T-cell (primary cell): ENCODE measurements at regions of chr1 and their contacts with region 1.

Region 1: GRCh38 chr1:52636721-52637695 is 4.0 kb downstream of the SHISAL2A start:
- DNase-seq: peak; percentile 45 to 85 (median 65)
- ATAC-seq: peak; percentile 71 to 75 (median 72)
- H3K4me3 ChIP-seq: peak overlapping the region in 1 of 2 donors; percentile 22
- H3K4me3 Mint-ChIP-seq: peak overlapping the region; percentile 75 to 85 (median 83)
- H3K27ac ChIP-seq: peak overlapping the region; percentile 99
- H3K27ac Mint-ChIP-seq: peak overlapping the region; percentile 99 to 100
- H3K4me1 ChIP-seq: peaks cover 50 to 93% of the 10 kb centered on the region in 2 experiments
- H3K4me1 Mint-ChIP-seq: peaks cover 81 to 87% (median 83%) of the 10 kb centered on the region in 3 donors
- H3K27me3 ChIP-seq: no peaks in the 10 kb centered on the region
- H3K27me3 Mint-ChIP-seq: no peaks in the 10 kb centered on the region

Region 2: GRCh38 chr1:52552505-52553361 is 84.3 kb before region 1 on chr1 and contains the start of gene TUT4:
- CTCF ChIA-PET with region 1: interaction called in 1 of 2 experiments, 8 read pairs
- POLR2A ChIA-PET with region 1: interaction called, 7 to 10 read pairs
- DNase-seq: peak; percentile 53 to 83 (median 68)
- ATAC-seq: peak; percentile 58 to 63 (median 61)
- H3K4me3 ChIP-seq: peak within 1 kb of the TSS; percentile 86 to 97
- H3K4me3 Mint-ChIP-seq: peak within 1 kb of the TSS in 2 of 3 donors; percentile 69 to 75
- H3K27ac ChIP-seq: peak within 1 kb of the TSS; percentile 98
- H3K27ac Mint-ChIP-seq: peak within 1 kb of the TSS; percentile 77 to 85
- H3K4me1 ChIP-seq: peaks cover 16 to 38% of the 10 kb centered on the region in 2 experiments
- H3K4me1 Mint-ChIP-seq: peaks cover 44 to 46% (median 44%) of the 10 kb centered on the region in 3 donors
- H3K27me3 ChIP-seq: no peaks in the 10 kb centered on the region
- H3K27me3 Mint-ChIP-seq: no peaks in the 10 kb centered on the region
- total RNA-seq, gene TUT4: 109 to 143 (median 129) TPM